Mammary epithelial cell (primary cell): ENCODE measurements at regions of chr18 and their contacts with region 1.

Region 1: DNA sequence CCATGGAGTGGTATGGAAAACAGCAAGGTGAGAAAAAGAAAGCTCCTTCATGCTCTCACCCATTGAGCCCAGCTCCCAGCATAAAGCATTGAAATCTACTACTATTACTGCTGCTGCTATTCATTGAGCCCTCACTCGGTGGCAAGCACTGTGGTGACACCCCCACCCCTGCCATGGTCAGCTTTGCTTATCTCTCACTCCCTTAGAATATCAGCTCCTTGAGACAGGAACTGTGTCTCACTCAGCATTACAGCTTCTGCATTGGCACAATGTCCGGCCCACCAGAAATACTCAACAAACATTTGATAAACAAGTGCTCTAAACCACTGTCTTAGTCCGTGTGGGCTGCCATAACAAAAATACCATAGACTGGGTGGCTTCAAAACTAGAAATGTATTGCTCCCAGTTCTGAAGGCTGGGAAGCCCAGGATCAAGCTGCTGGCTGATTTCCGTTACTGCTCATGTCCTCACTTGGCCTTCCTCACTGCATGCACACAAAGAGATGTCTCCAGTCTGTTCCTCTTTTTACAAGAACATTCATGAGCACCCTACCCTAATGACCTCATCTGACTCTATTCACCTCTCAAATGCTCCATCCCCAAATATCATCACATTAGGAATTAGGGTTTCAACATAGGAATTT is 116.3 kb downstream of the ZBTB7C start:
- DNase-seq: no peak
- H3K4me3 ChIP-seq: no peak overlapping the region
- H3K27ac ChIP-seq: no peak overlapping the region
- H3K4me1 ChIP-seq: peaks cover 25% of the 10 kb centered on the region
- H3K27me3 ChIP-seq: no peaks in the 10 kb centered on the region
- CTCF ChIP-seq: no peak

Region 2: GRCh38 chr18:48317781-48318381 is 25.0 kb after region 1 on chr18:
- CTCF ChIA-PET with region 1: interaction called, 13 read pairs
- dilution Hi-C with region 1: no loop called
- in situ Hi-C with region 1: no loop called
- intact Hi-C with region 1: no loop called
- DNase-seq: no peak
- H3K4me3 ChIP-seq: no peak overlapping the region
- H3K27ac ChIP-seq: no peak overlapping the region
- H3K4me1 ChIP-seq: peaks cover 24% of the 10 kb centered on the region
- H3K27me3 ChIP-seq: no peaks in the 10 kb centered on the region
- CTCF ChIP-seq: peak; percentile 13 to 39